ENCODE measurements at regions of chr11 and their contacts with region 1.

Region 1: DNA sequence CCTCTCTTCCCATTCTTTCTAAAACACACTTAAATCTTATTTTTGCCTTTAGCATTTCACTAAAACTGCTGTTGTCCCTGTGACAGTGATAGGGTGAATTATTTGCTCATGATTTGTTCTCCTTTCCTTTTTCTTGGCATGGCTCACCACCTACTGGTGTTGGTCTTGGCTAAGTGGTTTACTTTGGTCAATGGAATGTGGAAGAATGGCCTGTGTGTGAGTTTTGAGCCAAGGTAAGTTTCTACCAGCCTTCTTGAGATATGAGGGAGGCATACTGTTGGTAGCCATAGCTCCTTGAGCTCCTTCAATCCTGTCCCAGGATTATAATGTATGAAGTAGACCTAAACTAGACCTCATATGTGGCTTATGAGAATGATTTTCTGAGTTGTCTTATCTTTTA is 506.3 kb upstream of the RAG2 start:
- DNase-seq: no peak
- H3K4me3 ChIP-seq: no peak overlapping the region
- H3K27ac ChIP-seq: no peak overlapping the region
- H3K4me1 ChIP-seq: peaks cover 32% of the 10 kb centered on the region
- H3K27me3 ChIP-seq: no peaks in the 10 kb centered on the region
- CTCF ChIP-seq: no peak

Region 2: GRCh38 chr11:36945384-36945783 is 159.0 kb before region 1 on chr11:
- CTCF ChIA-PET with region 1: interaction called, 4 read pairs
- POLR2A ChIA-PET with region 1: no interaction called
- intact Hi-C with region 1: loop called (anchors 5 kb)
- DNase-seq: peak; percentile 89
- H3K4me3 ChIP-seq: no peak overlapping the region
- H3K27ac ChIP-seq: no peak overlapping the region
- H3K4me1 ChIP-seq: peaks cover 48% of the 10 kb centered on the region
- H3K27me3 ChIP-seq: no peaks in the 10 kb centered on the region
- CTCF ChIP-seq: peak; percentile 97

Measured in A673 (cell line).